ENCODE measurements at regions of chr14 and their contacts with region 1.

Region 1: DNA sequence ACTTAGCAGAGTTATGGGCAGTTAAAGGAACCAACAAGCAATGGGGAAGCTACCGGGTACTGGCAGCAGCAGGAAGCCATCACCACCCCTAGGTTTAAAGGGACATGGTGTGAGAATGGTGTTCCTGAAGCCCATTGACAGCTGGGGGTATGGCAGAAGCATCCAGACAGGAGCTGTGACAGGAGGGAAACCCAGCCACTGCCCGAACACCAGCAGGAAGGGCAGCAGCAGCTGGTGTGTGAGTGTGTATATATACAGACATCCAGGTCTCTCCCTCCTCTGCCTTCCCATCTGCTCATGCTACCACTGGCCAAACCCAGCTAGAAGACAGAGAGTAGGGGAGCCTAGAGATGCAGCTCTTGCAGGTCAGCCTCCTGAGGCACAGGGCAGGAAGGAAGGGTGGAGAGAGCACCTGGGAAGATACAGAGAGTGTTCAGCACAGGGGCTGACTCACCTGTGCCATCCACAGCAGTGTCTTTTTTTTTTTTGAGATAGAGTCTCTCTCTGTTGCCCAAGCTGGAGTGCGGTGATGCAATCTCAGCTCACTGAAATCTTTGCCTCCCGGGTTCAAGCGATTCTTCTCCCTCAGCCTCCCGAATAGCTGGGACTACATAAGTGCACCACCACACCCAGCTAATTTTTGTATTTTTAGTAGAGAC is 9.2 kb upstream of the ADCK1 start:
- DNase-seq: no peak
- ATAC-seq: no peak
- H3K4me3 ChIP-seq: no peak overlapping the region
- H3K4me3 Mint-ChIP-seq: no peak overlapping the region
- H3K27ac ChIP-seq: no peak overlapping the region
- H3K27ac Mint-ChIP-seq: no peak overlapping the region
- H3K4me1 ChIP-seq: no peaks in the 10 kb centered on the region
- H3K4me1 Mint-ChIP-seq: no peaks in the 10 kb centered on the region
- H3K27me3 ChIP-seq: peaks cover 0 to 16% of the 10 kb centered on the region in 2 experiments
- H3K27me3 Mint-ChIP-seq: peaks cover 4 to 10% of the 10 kb centered on the region in 2 donors

Region 2: DNA sequence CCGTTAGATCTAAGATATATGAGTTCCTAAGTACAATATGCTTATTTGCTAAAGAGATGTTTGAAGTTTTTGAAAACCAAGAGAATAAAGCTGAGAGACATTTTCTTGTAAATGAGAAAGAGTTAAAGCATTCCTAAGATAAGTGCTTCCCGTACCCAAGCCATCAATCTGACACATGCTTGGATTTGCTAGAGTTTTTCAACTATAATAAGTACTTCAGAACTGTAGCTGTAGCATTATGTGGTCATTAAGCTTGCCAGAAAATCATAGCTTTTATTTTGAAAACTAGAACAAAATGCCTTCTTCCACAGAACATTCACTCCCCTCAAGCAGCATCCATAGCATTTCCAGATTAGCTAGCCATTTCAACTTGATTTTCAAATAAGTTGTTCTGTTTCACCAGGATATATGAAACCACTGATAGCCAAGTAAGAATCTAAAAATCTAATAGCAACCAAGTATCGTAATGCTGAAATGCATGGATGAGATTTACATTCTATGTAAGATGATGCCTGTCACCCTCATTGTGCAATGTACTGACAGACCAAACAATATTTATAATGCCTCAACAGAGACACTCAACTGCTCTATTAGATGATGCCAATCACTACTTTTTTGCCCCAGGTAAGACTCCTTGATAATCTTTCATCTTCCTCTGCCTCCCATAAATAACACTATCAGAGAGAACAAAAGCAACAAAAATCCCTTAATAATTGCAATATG is 37.7 kb before region 1 on chr14:
- CTCF ChIA-PET with region 1: no interaction called
- POLR2A ChIA-PET with region 1: interaction called in 1 of 2 experiments, 10 read pairs
- DNase-seq: no peak
- ATAC-seq: no peak
- H3K4me3 ChIP-seq: no peak overlapping the region
- H3K4me3 Mint-ChIP-seq: peak overlapping the region in 1 of 3 donors; percentile 37
- H3K27ac ChIP-seq: no peak overlapping the region
- H3K27ac Mint-ChIP-seq: no peak overlapping the region
- H3K4me1 ChIP-seq: peaks cover 0 to 9% of the 10 kb centered on the region in 2 experiments
- H3K4me1 Mint-ChIP-seq: peaks cover 43 to 61% (median 49%) of the 10 kb centered on the region in 3 donors
- H3K27me3 ChIP-seq: no peaks in the 10 kb centered on the region
- H3K27me3 Mint-ChIP-seq: no peaks in the 10 kb centered on the region

Measured in T-cell (primary cell).